ENCODE measurements at regions of chr9 and their contacts with region 1.

Region 1: DNA sequence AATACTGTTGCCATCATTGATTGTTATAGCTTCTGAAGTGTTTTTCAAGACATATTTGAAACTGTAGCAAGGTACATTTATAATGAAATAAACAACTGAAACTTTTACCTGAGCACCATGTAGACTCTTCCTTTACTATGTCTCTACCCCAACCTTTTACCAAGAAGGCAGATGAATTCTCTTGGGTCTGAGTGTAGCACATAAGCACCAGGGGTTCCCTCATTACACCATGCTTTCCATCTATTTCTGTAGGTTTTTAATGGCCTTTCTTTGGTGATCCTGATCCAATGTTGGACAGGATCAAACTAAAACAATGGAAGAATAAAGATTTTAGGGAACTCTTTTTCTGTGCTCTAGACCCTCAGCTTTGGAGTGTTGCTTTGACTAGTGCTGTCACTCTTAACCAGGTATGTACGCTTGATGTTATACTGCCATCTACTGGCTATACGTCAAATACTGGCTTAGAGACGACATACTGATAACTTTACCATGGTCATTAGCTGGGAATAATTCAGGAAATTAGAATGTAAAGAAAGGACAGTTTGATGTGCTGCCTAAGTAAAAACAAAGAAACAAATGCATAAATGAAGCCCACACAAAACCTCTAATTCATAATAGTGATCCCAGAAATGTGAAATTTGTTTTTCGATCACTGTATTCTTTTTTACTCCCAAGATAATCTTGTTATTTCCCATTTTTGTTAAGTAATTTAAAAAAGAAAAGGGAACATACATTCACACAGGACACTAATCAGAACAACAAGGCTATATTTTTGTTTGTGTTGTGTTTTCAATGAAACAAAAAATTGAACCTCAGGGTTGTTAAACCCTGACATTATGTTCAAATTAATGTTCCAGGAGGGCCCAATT is 30.7 kb downstream of the IFNW1 start:
- DNase-seq: no peak
- H3K4me3 ChIP-seq: no peak overlapping the region
- H3K27me3 ChIP-seq: no peaks in the 10 kb centered on the region
- CTCF ChIP-seq: peak; percentile 74

Region 2: GRCh38 chr9:20884985-20885593 is 225.9 kb before region 1 on chr9:
- CTCF ChIA-PET with region 1: interaction called, 31 read pairs
- POLR2A ChIA-PET with region 1: no interaction called
- DNase-seq: no peak
- H3K4me3 ChIP-seq: no peak overlapping the region
- H3K27me3 ChIP-seq: no peaks in the 10 kb centered on the region
- CTCF ChIP-seq: peak; percentile 68

Measured in BJ (cell line).